ENCODE measurements at regions of chr13 and their contacts with region 1.

Region 1: DNA sequence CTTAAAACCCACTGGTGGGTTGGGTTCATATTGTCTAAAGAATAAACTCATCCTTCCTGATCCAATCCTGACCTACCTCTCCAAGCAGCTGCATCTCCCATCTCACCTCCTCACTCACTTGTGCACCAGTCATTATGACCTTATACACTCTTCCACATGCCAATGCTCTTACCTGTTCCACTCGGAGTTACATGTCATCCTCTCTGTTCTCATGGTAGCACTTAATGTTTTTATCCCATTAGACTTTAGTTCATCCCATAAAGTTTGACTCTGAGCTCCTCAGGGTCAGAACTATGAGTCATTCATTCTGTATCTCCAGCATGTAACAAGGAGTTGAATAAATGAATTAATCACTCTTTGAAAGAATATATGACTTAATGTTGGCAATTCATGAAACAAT is 330.2 kb downstream of the KLF12 start:
- DNase-seq: no peak
- ATAC-seq: no peak
- H3K4me3 ChIP-seq: no peak overlapping the region
- H3K4me3 Mint-ChIP-seq: no peak overlapping the region
- H3K27ac ChIP-seq: no peak overlapping the region
- H3K27ac Mint-ChIP-seq: peak overlapping the region in 5 of 9 donors; percentile 1 to 58 (median 44)
- H3K4me1 ChIP-seq: no peaks in the 10 kb centered on the region
- H3K4me1 Mint-ChIP-seq: peaks cover 0 to 52% (median 29%) of the 10 kb centered on the region in 7 donors
- H3K27me3 ChIP-seq: no peaks in the 10 kb centered on the region
- H3K27me3 Mint-ChIP-seq: no peaks in the 10 kb centered on the region

Region 2: DNA sequence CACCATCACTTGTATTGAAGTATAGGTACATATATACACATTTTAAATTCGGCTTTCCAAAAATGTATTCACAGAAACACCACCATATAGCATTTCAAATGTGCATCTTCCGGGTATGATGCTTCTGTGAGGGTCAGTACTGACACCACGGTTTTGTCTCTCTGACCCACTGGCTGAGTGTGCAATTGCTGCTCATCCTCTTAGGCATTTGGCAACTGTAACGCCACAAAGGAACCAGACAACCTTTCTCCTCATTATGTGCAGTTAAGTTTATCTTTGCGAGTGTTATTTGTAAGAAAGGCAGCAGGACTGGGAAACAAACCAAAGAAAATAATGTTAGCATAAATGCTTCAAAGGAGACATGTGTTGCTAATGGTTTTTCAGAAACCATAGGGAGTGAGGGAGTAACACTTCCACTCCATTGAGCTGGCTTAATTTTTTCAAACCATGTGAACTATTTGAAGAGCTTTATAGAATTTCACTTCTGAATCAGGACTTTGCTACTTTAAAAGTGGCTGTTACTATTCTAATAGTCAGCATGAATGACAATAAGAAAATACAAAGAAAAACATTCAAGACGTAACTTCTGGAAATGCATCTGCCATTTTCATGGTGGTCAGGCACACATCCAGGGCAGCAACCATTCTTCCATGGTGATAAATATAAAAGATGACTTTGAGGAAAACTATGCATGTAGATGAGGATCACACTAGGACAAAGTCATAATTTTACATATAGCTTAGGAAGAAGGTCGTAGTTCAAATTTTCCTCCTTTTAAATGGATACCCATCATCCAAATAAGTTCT is 1499.9 kb before region 1 on chr13:
- CTCF ChIA-PET with region 1: no interaction called
- POLR2A ChIA-PET with region 1: no interaction called
- intact Hi-C with region 1: no loop called
- DNase-seq: no peak
- ATAC-seq: no peak
- H3K4me3 ChIP-seq: no peak overlapping the region
- H3K4me3 Mint-ChIP-seq: no peak overlapping the region
- H3K27ac ChIP-seq: no peak overlapping the region
- H3K27ac Mint-ChIP-seq: no peak overlapping the region
- H3K4me1 ChIP-seq: no peaks in the 10 kb centered on the region
- H3K4me1 Mint-ChIP-seq: no peaks in the 10 kb centered on the region
- H3K27me3 ChIP-seq: no peaks in the 10 kb centered on the region
- H3K27me3 Mint-ChIP-seq: no peaks in the 10 kb centered on the region

Region 3: DNA sequence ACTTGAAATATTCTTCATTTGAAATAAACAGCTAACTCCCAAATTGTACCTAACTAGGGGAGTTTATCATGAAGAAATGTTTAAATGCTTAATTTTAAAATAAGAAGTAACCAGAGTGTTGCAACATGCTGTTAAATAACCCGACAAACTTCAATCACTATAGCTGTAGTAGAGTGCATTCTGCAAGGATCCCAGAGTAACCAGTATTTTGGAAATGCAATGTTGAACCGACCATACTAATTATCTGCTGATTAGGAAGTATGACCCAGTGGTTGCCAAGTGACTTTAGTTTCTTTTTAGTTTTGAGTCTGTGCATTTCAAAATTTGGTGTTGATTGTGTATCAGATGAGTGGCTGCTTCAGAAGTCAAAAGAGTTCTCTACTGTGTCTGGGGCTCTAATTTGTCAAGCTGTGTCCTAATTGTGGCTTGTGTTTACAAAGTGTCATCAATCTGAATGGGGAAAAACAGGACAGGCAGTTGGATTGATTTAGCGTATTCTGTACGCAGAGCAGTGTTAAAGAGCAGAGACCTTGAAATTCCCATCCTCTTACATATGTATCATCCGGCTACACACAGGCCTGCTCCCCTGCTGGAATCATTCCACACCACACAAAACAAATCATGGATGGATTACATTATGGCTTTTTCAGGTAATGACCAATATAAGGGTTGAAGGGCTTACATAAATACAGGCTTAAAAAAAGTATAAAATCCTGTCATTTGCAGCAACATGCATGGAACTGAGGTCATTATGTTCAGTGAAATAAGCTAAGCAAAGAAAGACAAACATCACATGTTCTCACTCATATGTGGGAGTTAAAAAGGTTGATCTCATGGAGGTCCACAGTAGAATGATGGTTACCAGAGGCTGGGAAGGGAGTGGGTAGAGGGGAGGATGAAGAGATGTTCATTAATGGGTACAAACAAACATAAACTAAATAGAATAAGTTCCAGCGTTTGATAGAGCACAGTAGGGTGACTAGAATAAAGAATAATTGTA is 21.2 kb before region 1 on chr13:
- CTCF ChIA-PET with region 1: interaction called, 4 read pairs
- POLR2A ChIA-PET with region 1: no interaction called
- intact Hi-C with region 1: loop called in 1 of 2 experiments (anchors 2 kb)
- DNase-seq: no peak
- ATAC-seq: no peak
- H3K4me3 ChIP-seq: no peak overlapping the region
- H3K4me3 Mint-ChIP-seq: no peak overlapping the region
- H3K27ac ChIP-seq: no peak overlapping the region
- H3K27ac Mint-ChIP-seq: peak overlapping the region in 8 of 9 donors; percentile 6 to 87 (median 74)
- H3K4me1 ChIP-seq: no peaks in the 10 kb centered on the region
- H3K4me1 Mint-ChIP-seq: peaks cover 0 to 58% (median 50%) of the 10 kb centered on the region in 7 donors
- H3K27me3 ChIP-seq: no peaks in the 10 kb centered on the region
- H3K27me3 Mint-ChIP-seq: no peaks in the 10 kb centered on the region

Region 4: DNA sequence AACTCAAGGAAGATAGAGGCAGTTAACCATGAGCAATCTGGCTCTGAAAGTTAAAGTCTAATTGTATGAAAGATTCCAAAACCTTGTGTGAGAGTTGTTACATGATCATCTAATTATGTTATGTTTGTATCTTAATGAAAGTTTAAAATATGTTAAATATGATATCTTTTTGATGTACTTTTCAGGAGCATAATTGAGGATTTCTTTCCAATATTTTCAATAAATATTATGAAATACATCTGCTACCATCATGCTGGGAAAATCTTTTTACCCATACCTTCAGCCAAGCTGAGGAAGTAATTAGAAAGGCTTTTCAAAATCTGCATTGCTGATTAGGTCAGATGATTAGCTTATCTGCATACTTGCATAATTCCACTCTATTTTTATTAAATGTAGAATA is 11.8 kb after region 1 on chr13:
- CTCF ChIA-PET with region 1: no interaction called
- POLR2A ChIA-PET with region 1: interaction called, 5 read pairs
- intact Hi-C with region 1: loop called in 1 of 2 experiments (anchors 2 kb)
- DNase-seq: no peak
- ATAC-seq: no peak
- H3K4me3 ChIP-seq: no peak overlapping the region
- H3K4me3 Mint-ChIP-seq: no peak overlapping the region
- H3K27ac ChIP-seq: no peak overlapping the region
- H3K27ac Mint-ChIP-seq: peak overlapping the region in 5 of 9 donors; percentile 56 to 64 (median 61)
- H3K4me1 ChIP-seq: no peaks in the 10 kb centered on the region
- H3K4me1 Mint-ChIP-seq: peaks cover 5 to 59% (median 46%) of the 10 kb centered on the region in 7 donors
- H3K27me3 ChIP-seq: no peaks in the 10 kb centered on the region
- H3K27me3 Mint-ChIP-seq: no peaks in the 10 kb centered on the region

Region 5: DNA sequence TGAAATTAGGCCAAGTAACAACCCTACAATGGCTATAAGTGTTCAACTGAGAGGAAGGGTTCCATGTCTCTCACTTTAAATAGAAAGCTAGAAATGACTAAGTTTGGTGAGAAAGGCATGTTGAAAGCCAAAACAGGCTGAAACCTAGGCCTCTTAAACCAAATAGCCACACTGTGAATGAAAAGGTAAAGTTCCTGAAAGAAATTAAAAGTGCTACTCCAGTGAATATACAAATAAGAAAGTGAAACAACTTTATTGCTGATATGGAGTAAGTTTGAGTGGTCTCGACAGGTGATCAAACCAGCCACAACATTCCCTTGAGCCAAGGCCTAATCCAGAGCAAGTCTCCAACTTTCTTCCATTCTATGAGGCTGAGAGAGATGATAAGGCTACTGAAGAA is 120.6 kb after region 1 on chr13:
- CTCF ChIA-PET with region 1: no interaction called
- POLR2A ChIA-PET with region 1: no interaction called
- intact Hi-C with region 1: no loop called
- DNase-seq: no peak
- ATAC-seq: no peak
- H3K4me3 ChIP-seq: no peak overlapping the region
- H3K4me3 Mint-ChIP-seq: peak overlapping the region in 6 of 10 donors; percentile 10 to 49 (median 41)
- H3K27ac ChIP-seq: no peak overlapping the region
- H3K27ac Mint-ChIP-seq: peak overlapping the region in 5 of 9 donors; percentile 12 to 45 (median 33)
- H3K4me1 ChIP-seq: peaks cover 10 to 38% of the 10 kb centered on the region in 2 donors
- H3K4me1 Mint-ChIP-seq: peaks cover 21 to 95% (median 85%) of the 10 kb centered on the region in 7 donors
- H3K27me3 ChIP-seq: no peaks in the 10 kb centered on the region
- H3K27me3 Mint-ChIP-seq: no peaks in the 10 kb centered on the region

Measured in naive thymus-derived CD4-positive, alpha-beta T cell (primary cell).